ENCODE measurements at regions of chr11 and their contacts with region 1.

Region 1: GRCh38 chr11:77994412-77995362 is at the start of gene INTS4:
- DNase-seq: peak; percentile 98
- H3K4me3 Mint-ChIP-seq: peak within 1 kb of the TSS; percentile 92
- H3K27ac Mint-ChIP-seq: peak within 1 kb of the TSS; percentile 84
- H3K4me1 Mint-ChIP-seq: peaks cover 30% of the 10 kb centered on the region
- H3K27me3 Mint-ChIP-seq: no peaks in the 10 kb centered on the region
- total RNA-seq, gene INTS4: 58.2 and 63.6 TPM in 2 replicates

Region 2: GRCh38 chr11:77637345-77638165 is 357.1 kb before region 1 on chr11 and contains the start of gene CLNS1A:
- intact Hi-C with region 1: loop called (anchors 1 kb)
- DNase-seq: peak; percentile 74
- H3K4me3 Mint-ChIP-seq: peak within 1 kb of the TSS; percentile 96
- H3K27ac Mint-ChIP-seq: peak within 1 kb of the TSS; percentile 95
- H3K4me1 Mint-ChIP-seq: peaks cover 29% of the 10 kb centered on the region
- H3K27me3 Mint-ChIP-seq: no peaks in the 10 kb centered on the region
- total RNA-seq, gene CLNS1A: 161 and 169 TPM in 2 replicates

Region 3: DNA sequence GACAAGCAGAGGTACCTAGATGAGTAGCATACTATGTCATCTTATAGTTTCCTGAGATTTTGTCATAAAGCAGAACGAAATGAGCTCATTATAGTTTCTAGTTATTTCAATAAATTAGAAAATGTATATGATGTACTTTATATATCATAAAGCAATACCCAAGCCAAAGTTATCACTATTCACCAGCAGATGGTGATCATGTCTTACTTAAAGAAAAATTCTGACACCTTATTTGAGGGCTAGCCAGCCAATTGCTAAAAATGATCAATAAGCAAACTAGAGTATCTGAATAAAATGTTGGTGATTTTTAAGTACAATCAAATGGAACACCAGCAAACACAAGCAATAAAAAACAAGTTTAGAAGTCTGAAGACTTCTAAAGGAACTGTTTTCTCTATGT is 218.2 kb before region 1 on chr11:
- intact Hi-C with region 1: loop called (anchors 1 kb)
- DNase-seq: no peak
- H3K4me3 Mint-ChIP-seq: no peak overlapping the region
- H3K27ac Mint-ChIP-seq: no peak overlapping the region
- H3K4me1 Mint-ChIP-seq: peaks cover 7% of the 10 kb centered on the region
- H3K27me3 Mint-ChIP-seq: no peaks in the 10 kb centered on the region

Region 4: GRCh38 chr11:77968337-77968736 is 26.4 kb before region 1 on chr11:
- intact Hi-C with region 1: no loop called
- DNase-seq: no peak
- H3K4me3 Mint-ChIP-seq: no peak overlapping the region
- H3K27ac Mint-ChIP-seq: no peak overlapping the region
- H3K4me1 Mint-ChIP-seq: no peaks in the 10 kb centered on the region
- H3K27me3 Mint-ChIP-seq: no peaks in the 10 kb centered on the region

Region 5: GRCh38 chr11:78030429-78031325 is 36.0 kb after region 1 on chr11:
- intact Hi-C with region 1: no loop called
- DNase-seq: no peak
- H3K4me3 Mint-ChIP-seq: no peak overlapping the region
- H3K27ac Mint-ChIP-seq: no peak overlapping the region
- H3K4me1 Mint-ChIP-seq: no peaks in the 10 kb centered on the region
- H3K27me3 Mint-ChIP-seq: no peaks in the 10 kb centered on the region

Region 6: GRCh38 chr11:78045851-78046485 is 51.3 kb after region 1 on chr11:
- intact Hi-C with region 1: loop called (anchors 2 kb)
- DNase-seq: peak; percentile 68
- H3K4me3 Mint-ChIP-seq: no peak overlapping the region
- H3K27ac Mint-ChIP-seq: no peak overlapping the region
- H3K4me1 Mint-ChIP-seq: peaks cover 13% of the 10 kb centered on the region
- H3K27me3 Mint-ChIP-seq: no peaks in the 10 kb centered on the region

Region 7: DNA sequence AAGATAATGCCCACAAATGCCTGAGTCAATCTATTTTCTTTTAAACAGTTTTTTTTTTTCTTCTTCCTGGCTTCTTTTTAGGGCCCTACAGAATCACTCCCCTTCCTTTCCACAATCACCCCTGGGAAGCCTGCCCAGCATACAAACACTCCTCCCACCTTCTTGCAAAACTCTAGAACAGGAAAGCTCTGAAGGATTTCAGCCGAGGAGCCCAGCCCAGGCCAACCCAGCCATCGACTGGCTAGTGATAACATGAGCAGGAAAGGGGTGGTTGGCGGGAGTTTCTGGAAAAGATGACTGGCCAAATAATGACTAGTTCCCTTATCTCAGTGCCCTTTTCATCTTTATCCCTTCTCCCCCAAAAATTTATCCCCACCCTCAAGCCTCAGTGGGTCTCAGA is 262.3 kb after region 1 on chr11:
- intact Hi-C with region 1: no loop called
- DNase-seq: no peak
- H3K4me3 Mint-ChIP-seq: no peak overlapping the region
- H3K27ac Mint-ChIP-seq: no peak overlapping the region
- H3K4me1 Mint-ChIP-seq: peaks cover 9% of the 10 kb centered on the region
- H3K27me3 Mint-ChIP-seq: peaks cover 1% of the 10 kb centered on the region